Thyroid gland (tissue), 4 donors: ENCODE measurements at regions of chr2 and their contacts with region 1.

Region 1: GRCh38 chr2:231925303-231926179 is 655 bp downstream of the NPPC start:
- DNase-seq: peak; percentile 87 to 91
- H3K4me3 ChIP-seq: peak overlapping the region in 1 of 3 donors; percentile 35
- H3K27ac ChIP-seq: no peak overlapping the region
- H3K4me1 ChIP-seq: peaks cover 14 to 25% of the 10 kb centered on the region in 2 donors
- H3K27me3 ChIP-seq: no peaks in the 10 kb centered on the region
- CTCF ChIP-seq: peak; percentile 49 to 95 (median 86)
- POLR2A ChIP-seq: no peak

Region 2: DNA sequence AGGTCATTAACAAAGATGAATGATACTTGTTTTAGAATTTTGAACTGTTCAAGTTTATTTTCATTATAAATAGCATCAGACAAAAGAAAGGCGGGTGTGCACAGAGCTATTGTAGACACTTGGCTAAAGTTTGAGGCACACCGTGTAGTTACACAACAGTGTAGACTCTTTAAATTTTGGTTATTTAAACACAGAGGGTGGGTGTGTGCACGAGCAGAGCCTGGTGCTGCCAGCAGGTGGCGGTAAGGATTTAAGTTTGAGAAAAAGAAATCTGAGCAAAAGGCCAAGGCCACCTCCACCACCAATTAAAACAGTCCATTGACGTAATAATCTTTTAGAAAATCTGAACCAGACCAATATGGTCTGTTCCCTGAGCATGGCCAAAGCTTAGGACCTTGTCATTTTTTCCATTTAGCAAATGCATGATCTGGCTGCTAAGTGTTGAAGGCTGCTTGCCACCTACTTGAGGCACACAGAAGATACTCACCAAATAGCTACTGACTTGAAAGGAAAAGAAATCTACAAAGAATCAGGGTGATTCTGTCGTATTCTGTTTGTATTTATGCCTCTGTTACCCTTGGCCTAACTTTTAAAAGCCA is 124.9 kb before region 1 on chr2:
- intact Hi-C with region 1: no loop called
- DNase-seq: peak; percentile 31 to 35
- H3K4me3 ChIP-seq: no peak overlapping the region
- H3K27ac ChIP-seq: no peak overlapping the region
- H3K4me1 ChIP-seq: peaks cover under 1 to 2% of the 10 kb centered on the region in 2 donors
- H3K27me3 ChIP-seq: no peaks in the 10 kb centered on the region
- CTCF ChIP-seq: peak in 3 of 6 experiments; percentile 29 to 61 (median 31)
- POLR2A ChIP-seq: no peak

Region 3: DNA sequence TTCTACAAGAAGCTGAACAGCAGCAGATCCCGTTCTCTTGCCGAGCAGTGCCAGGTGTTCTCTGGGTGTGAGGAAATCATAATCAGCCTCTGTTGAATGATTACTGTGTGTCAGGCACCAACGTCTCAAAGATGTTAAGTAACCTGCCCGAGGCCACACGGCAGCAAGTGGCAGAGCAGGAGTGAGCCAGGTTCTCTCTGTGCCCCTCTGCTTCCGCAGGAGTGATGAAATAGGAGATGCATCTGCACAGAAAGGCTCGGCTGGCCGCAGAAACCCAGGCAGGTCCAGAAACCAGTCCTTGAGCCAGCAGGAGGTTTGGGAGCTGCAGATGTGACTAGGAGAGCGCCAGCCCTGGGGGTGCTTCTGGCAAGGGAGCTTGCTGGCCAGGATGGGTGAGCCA is 70.9 kb before region 1 on chr2:
- intact Hi-C with region 1: loop called (anchors 5 kb)
- DNase-seq: no peak
- H3K4me3 ChIP-seq: no peak overlapping the region
- H3K27ac ChIP-seq: no peak overlapping the region
- H3K4me1 ChIP-seq: no peaks in the 10 kb centered on the region
- H3K27me3 ChIP-seq: no peaks in the 10 kb centered on the region
- CTCF ChIP-seq: no peak
- POLR2A ChIP-seq: no peak

Region 4: GRCh38 chr2:232142049-232142448 is 216.5 kb after region 1 on chr2:
- intact Hi-C with region 1: loop called (anchors 5 kb)
- DNase-seq: peak; percentile 53 to 57
- H3K4me3 ChIP-seq: no peak overlapping the region
- H3K27ac ChIP-seq: no peak overlapping the region
- H3K4me1 ChIP-seq: no peaks in the 10 kb centered on the region
- H3K27me3 ChIP-seq: no peaks in the 10 kb centered on the region
- CTCF ChIP-seq: peak; percentile 33 to 90 (median 74)
- POLR2A ChIP-seq: no peak

Region 5: DNA sequence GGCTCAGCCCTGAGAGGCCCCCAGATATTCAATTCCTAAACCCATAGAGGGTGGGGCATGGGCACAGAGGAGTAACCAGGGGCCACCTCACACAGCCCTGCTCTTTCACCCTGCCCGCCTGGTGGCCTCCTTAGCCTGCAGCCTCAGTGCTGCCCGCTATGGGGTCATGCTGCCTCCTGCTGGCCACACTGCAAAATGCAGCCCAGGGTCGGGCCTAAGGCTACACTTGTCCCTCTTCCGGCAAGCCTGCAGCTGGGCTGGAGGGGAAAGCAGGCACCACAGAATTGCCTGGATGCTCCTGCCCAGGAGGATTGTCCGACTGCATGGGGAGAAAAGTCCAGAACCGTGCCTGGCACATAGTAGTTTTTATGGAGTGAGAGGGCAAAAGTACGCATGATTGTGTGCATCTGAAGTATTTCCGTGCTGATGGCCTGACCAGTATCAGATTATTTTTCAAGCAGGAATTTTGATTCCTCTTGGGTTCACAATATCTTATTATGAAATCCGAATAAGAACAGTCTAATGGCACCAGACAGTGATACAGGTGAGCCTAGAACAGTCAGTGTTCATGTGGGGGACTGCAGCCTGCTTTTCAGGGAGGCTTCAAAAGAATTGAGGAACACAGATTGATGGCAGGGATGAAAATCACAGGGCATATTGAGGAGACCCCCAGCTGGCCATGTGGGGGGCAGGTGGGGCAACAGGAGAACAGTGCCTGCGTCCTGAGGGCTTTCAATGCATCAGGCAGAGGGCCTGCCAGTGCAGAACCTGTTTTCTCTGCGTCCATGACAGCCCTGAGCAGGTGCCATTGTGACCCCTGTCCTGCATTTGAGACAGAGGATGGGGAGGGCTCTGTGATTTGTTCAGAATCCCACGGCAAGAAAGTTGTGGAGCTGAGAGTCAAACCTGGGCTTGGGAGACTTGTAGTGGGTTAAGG is 401.8 kb after region 1 on chr2:
- intact Hi-C with region 1: loop called (anchors 2 kb)
- DNase-seq: peak; percentile 62 to 73
- H3K4me3 ChIP-seq: no peak overlapping the region
- H3K27ac ChIP-seq: no peak overlapping the region
- H3K4me1 ChIP-seq: peaks cover 22 to 42% of the 10 kb centered on the region in 2 donors
- H3K27me3 ChIP-seq: no peaks in the 10 kb centered on the region
- CTCF ChIP-seq: peak; percentile 48 to 94 (median 84)
- POLR2A ChIP-seq: no peak

Region 6: GRCh38 chr2:232521959-232522622 is 596.5 kb after region 1 on chr2:
- intact Hi-C with region 1: loop called (anchors 10 kb)
- DNase-seq: peak; percentile 43 to 47
- H3K4me3 ChIP-seq: no peak overlapping the region
- H3K27ac ChIP-seq: no peak overlapping the region
- H3K4me1 ChIP-seq: peaks cover 6 to 25% of the 10 kb centered on the region in 2 donors
- H3K27me3 ChIP-seq: peaks cover 23% of the 10 kb centered on the region
- CTCF ChIP-seq: peak in 5 of 6 experiments; percentile 69 to 94 (median 88)
- POLR2A ChIP-seq: no peak